ENCODE measurements at regions of chr21 and their contacts with region 1.

Region 1: GRCh38 chr21:41289426-41289825 is 27.2 kb upstream of the FAM3B start:
- DNase-seq: no peak
- ATAC-seq: no peak
- H3K4me3 ChIP-seq: no peak overlapping the region
- H3K4me3 Mint-ChIP-seq: no peak overlapping the region
- H3K27ac ChIP-seq: no peak overlapping the region
- H3K27ac Mint-ChIP-seq: no peak overlapping the region
- H3K4me1 ChIP-seq: peaks cover 3 to 4% of the 10 kb centered on the region in 2 donors
- H3K4me1 Mint-ChIP-seq: peaks cover 4 to 12% (median 7%) of the 10 kb centered on the region in 7 donors
- H3K27me3 ChIP-seq: no peaks in the 10 kb centered on the region
- H3K27me3 Mint-ChIP-seq: peaks cover 3 to 45% (median 16%) of the 10 kb centered on the region in 5 donors

Region 2: DNA sequence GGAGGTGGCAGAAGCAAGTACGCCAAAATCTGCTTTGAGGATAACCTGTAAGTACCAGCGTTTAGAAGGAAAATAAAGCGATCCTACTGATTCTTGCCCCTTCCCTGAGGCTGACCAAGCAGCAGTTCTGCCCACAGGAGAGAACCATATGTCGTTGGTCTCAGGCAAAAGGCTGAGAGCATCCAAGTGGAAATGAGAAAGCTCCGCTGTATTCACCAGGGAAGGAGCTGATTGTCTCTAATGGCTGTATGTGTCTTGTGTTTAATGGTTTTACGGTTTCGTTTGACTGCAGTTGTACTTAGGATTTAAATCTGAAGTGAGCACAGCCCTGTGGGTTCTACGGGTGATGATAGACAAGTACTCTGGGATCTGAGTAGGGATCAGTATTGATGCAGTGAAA is 49.0 kb after region 1 on chr21:
- CTCF ChIA-PET with region 1: no interaction called
- POLR2A ChIA-PET with region 1: no interaction called
- intact Hi-C with region 1: loop called in 1 of 2 experiments (anchors 5 kb)
- DNase-seq: no peak
- ATAC-seq: no peak
- H3K4me3 ChIP-seq: no peak overlapping the region
- H3K4me3 Mint-ChIP-seq: no peak overlapping the region
- H3K27ac ChIP-seq: no peak overlapping the region
- H3K27ac Mint-ChIP-seq: no peak overlapping the region
- H3K4me1 ChIP-seq: no peaks in the 10 kb centered on the region
- H3K4me1 Mint-ChIP-seq: no peaks in the 10 kb centered on the region
- H3K27me3 ChIP-seq: no peaks in the 10 kb centered on the region
- H3K27me3 Mint-ChIP-seq: peaks cover 0 to 31% (median 5%) of the 10 kb centered on the region in 5 donors

Region 3: GRCh38 chr21:41475714-41476420 is 186.4 kb after region 1 on chr21:
- CTCF ChIA-PET with region 1: no interaction called
- POLR2A ChIA-PET with region 1: no interaction called
- intact Hi-C with region 1: no loop called
- DNase-seq: no peak
- ATAC-seq: no peak
- H3K4me3 ChIP-seq: no peak overlapping the region
- H3K4me3 Mint-ChIP-seq: no peak overlapping the region
- H3K27ac ChIP-seq: no peak overlapping the region
- H3K27ac Mint-ChIP-seq: no peak overlapping the region
- H3K4me1 ChIP-seq: no peaks in the 10 kb centered on the region
- H3K4me1 Mint-ChIP-seq: peaks cover 0 to 7% (median 0%) of the 10 kb centered on the region in 7 donors
- H3K27me3 ChIP-seq: no peaks in the 10 kb centered on the region
- H3K27me3 Mint-ChIP-seq: peaks cover 0 to 19% (median 10%) of the 10 kb centered on the region in 5 donors

Measured in naive thymus-derived CD4-positive, alpha-beta T cell (primary cell).